ENCODE measurements at regions of chr13 and their contacts with region 1.

Region 1: DNA sequence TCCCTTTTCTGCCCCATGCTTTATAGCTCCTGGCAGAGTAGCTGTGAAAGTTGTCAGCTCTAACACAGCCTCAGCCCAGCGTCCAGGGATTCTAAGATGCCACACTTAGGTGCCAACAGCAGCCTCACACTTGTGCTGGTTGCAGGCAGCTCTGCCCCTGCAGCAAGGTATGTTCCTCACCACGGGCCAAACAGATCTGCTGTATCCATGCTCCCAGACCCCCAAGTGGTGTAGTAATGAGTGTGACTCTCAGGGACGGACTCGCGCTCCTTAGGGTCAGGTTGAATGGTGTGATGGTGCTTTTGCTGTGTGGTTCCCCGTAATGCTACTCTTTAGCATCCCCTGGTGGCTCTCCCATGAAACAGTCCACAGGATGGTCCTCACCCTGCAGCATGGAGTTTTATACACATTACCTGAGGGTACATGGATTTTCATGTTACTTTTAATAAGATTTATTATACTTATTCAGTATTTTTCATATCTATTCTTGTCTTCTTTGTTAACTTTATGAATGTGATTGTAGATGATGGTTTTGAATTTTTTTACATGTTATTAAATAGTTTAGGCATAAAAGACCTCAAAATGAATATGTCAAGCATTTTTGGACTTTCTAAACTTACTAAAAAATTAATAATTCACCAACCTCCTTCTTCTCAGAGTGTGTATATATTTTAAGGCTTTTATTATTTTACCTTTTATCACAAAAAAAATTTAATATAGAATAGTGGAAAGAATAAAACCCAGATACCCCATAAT is 232.5 kb downstream of the SLC7A1 start:
- DNase-seq: peak; percentile 46
- H3K4me3 Mint-ChIP-seq: no peak overlapping the region
- H3K27ac Mint-ChIP-seq: no peak overlapping the region
- H3K4me1 Mint-ChIP-seq: no peaks in the 10 kb centered on the region
- H3K27me3 Mint-ChIP-seq: peaks cover 5% of the 10 kb centered on the region

Region 2: DNA sequence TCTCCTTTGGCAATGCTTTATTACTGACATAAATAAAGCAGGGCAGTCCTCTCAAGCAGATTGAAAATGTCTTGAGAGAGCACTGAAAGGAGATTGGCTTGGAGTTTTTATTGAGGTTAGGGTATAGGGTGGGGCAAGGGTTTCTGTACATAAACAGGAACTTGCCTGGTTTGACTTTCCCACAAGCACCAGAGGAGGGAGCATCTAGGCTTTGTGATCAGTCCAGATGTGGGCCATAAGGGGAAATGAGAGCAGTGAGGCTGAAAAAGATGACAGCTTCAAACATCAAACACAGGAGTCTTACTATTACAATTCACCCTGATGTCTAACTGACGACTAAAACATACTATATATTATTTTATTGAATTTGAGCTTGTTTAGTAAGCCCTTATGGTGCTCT is 282.0 kb before region 1 on chr13:
- CTCF ChIA-PET with region 1: interaction called, 13 read pairs
- POLR2A ChIA-PET with region 1: no interaction called
- DNase-seq: peak; percentile 52
- H3K4me3 Mint-ChIP-seq: no peak overlapping the region
- H3K27ac Mint-ChIP-seq: peak overlapping the region; percentile 65
- H3K4me1 Mint-ChIP-seq: peaks cover 23% of the 10 kb centered on the region
- H3K27me3 Mint-ChIP-seq: peaks cover 3% of the 10 kb centered on the region

Region 3: DNA sequence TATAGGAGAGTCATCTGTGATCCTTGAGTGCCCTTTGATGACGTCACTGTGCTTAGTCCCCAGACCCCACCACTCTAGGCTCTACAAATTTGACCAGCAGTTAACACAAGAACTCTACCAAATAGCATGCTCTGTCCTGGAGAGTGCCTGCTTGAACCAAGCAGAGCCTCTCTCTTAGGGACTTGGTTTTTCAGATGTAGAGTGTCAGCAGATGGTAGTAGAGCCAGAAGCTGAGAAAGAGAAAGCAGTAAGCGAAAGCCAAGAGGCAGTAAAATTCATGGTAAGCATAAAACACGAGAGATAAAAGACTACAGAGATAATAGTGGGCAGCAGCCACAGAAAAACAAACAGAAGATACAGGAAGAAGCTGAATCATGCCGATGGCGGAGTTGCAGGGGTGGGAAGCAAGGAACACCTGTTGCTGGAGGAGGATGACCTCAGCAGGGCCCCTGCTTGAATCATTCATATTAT is 39.2 kb after region 1 on chr13:
- CTCF ChIA-PET with region 1: no interaction called
- POLR2A ChIA-PET with region 1: no interaction called
- DNase-seq: no peak
- H3K4me3 Mint-ChIP-seq: no peak overlapping the region
- H3K27ac Mint-ChIP-seq: no peak overlapping the region
- H3K4me1 Mint-ChIP-seq: no peaks in the 10 kb centered on the region
- H3K27me3 Mint-ChIP-seq: peaks cover 11% of the 10 kb centered on the region

Region 4: GRCh38 chr13:29484236-29484635 is 121.2 kb after region 1 on chr13:
- CTCF ChIA-PET with region 1: no interaction called
- POLR2A ChIA-PET with region 1: no interaction called
- DNase-seq: no peak
- H3K4me3 Mint-ChIP-seq: no peak overlapping the region
- H3K27ac Mint-ChIP-seq: no peak overlapping the region
- H3K4me1 Mint-ChIP-seq: no peaks in the 10 kb centered on the region
- H3K27me3 Mint-ChIP-seq: peaks cover 6% of the 10 kb centered on the region